PC-9 (cell line): ENCODE measurements at regions of chr5 and their contacts with region 1.

Region 1: DNA sequence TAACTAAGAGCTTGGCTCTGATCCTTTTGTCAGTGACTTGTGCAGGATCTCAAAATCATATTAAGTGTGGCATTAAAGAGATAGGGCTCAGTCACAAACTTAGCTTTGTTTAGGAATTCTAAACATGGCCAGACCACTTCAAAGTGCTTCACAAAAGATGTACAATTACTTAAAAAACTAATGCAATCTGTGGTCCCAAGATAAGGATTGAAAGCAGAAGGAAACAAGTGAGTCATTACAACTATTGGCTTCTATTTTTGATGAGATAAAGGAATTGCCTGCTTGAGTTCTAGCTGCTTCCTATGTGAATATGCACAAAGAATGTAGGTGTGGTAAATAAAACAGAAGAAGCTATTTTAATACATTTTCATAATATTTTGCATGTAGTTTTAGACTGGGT is 44.9 kb upstream of the SLC12A2 start:
- DNase-seq: peak in 1 of 2 experiments; percentile 91
- H3K4me3 ChIP-seq: no peak overlapping the region
- H3K27ac ChIP-seq: peak overlapping the region; percentile 72
- H3K4me1 ChIP-seq: peaks cover 35% of the 10 kb centered on the region
- H3K27me3 ChIP-seq: no peaks in the 10 kb centered on the region
- CTCF ChIP-seq: no peak

Region 2: DNA sequence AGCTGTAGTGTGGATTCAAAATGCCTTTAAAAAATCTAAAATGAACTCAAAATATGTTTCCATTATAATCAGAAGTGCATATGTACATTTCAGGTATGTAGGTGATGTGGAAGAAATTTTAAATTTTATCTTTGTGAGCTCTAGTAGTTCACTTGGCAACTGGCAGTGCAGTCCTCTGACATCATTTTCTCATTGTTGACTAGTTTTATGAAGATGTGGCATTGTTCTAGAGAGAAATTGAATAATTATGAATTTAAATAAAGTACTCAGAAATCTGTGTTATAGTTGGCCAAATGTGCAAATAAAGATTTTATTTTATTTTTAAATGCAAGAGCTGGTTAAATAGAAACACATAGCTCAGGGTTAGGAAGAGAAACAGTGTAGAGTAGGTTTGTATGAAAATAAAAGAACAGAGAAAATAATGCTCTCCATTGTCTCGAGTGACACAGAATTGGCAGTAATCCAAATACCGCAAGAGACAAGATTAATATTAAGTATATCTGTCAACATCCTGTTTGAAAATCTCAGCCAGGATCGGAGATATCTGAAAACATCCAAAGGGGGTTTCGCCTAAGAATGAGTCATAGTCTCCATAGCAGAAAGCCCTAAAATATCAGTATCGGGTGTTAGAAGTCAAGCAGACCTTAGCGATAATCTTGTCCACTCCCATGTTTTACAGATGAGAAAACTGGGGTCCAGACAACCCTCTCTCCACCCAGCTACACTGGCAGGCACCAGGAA is 146.0 kb before region 1 on chr5:
- CTCF ChIA-PET with region 1: no interaction called
- POLR2A ChIA-PET with region 1: no interaction called
- intact Hi-C with region 1: loop called (anchors 5 kb)
- DNase-seq: peak; percentile 35 to 80
- H3K4me3 ChIP-seq: no peak overlapping the region
- H3K27ac ChIP-seq: peak overlapping the region; percentile 75
- H3K4me1 ChIP-seq: peaks cover 23% of the 10 kb centered on the region
- H3K27me3 ChIP-seq: no peaks in the 10 kb centered on the region
- CTCF ChIP-seq: no peak

Region 3: GRCh38 chr5:128201065-128201926 is 162.7 kb after region 1 on chr5:
- CTCF ChIA-PET with region 1: no interaction called
- POLR2A ChIA-PET with region 1: no interaction called
- intact Hi-C with region 1: loop called (anchors 2 kb)
- DNase-seq: peak; percentile 86 to 91
- H3K4me3 ChIP-seq: peak overlapping the region; percentile 44; the same call in 1 of the 2 replicates
- H3K27ac ChIP-seq: peak overlapping the region; percentile 99
- H3K4me1 ChIP-seq: peaks cover 50% of the 10 kb centered on the region
- H3K27me3 ChIP-seq: no peaks in the 10 kb centered on the region
- CTCF ChIP-seq: peak; percentile 90